Naive thymus-derived CD4-positive, alpha-beta T cell (primary cell): ENCODE measurements at regions of chr1 and their contacts with region 1.

Region 1: GRCh38 chr1:27392096-27392777 is at the start of gene GPR3:
- DNase-seq: peak; percentile 82 to 95 (median 88)
- ATAC-seq: peak; percentile 97
- H3K4me3 ChIP-seq: peak within 1 kb of the TSS; percentile 57
- H3K4me3 Mint-ChIP-seq: peak within 1 kb of the TSS; percentile 76 to 90 (median 83)
- H3K27ac ChIP-seq: peak within 1 kb of the TSS; percentile 64
- H3K27ac Mint-ChIP-seq: peak within 1 kb of the TSS; percentile 54 to 98 (median 84)
- H3K4me1 ChIP-seq: peaks cover 9 to 18% of the 10 kb centered on the region in 2 donors
- H3K4me1 Mint-ChIP-seq: peaks cover 12 to 27% (median 20%) of the 10 kb centered on the region in 7 donors
- H3K27me3 ChIP-seq: no peaks in the 10 kb centered on the region
- H3K27me3 Mint-ChIP-seq: peaks cover 0 to 16% (median 0%) of the 10 kb centered on the region in 5 donors
- total RNA-seq, gene GPR3: 0.24 to 0.93 (median 0.45) TPM in 3 of 5 experiments, not detected in the others

Region 2: GRCh38 chr1:27044613-27045151 is 347.6 kb before region 1 on chr1:
- CTCF ChIA-PET with region 1: interaction called, 3 read pairs
- POLR2A ChIA-PET with region 1: no interaction called
- intact Hi-C with region 1: loop called (anchors 10 kb)
- DNase-seq: peak; percentile 69 to 92 (median 86)
- ATAC-seq: peak; percentile 95
- H3K4me3 ChIP-seq: peak overlapping the region; percentile 39
- H3K4me3 Mint-ChIP-seq: peak overlapping the region; percentile 39 to 85 (median 64)
- H3K27ac ChIP-seq: peak overlapping the region; percentile 58
- H3K27ac Mint-ChIP-seq: peak overlapping the region; percentile 1 to 86 (median 40)
- H3K4me1 ChIP-seq: peaks cover 0 to 15% of the 10 kb centered on the region in 2 donors
- H3K4me1 Mint-ChIP-seq: peaks cover 3 to 26% (median 19%) of the 10 kb centered on the region in 7 donors
- H3K27me3 ChIP-seq: no peaks in the 10 kb centered on the region
- H3K27me3 Mint-ChIP-seq: no peaks in the 10 kb centered on the region

Region 3: GRCh38 chr1:27203946-27204345 is 188.3 kb before region 1 on chr1:
- CTCF ChIA-PET with region 1: no interaction called
- POLR2A ChIA-PET with region 1: no interaction called
- intact Hi-C with region 1: loop called in 1 of 2 experiments (anchors 2 kb)
- DNase-seq: no peak
- ATAC-seq: no peak
- H3K4me3 ChIP-seq: no peak overlapping the region
- H3K4me3 Mint-ChIP-seq: no peak overlapping the region
- H3K27ac ChIP-seq: no peak overlapping the region
- H3K27ac Mint-ChIP-seq: no peak overlapping the region
- H3K4me1 ChIP-seq: no peaks in the 10 kb centered on the region
- H3K4me1 Mint-ChIP-seq: no peaks in the 10 kb centered on the region
- H3K27me3 ChIP-seq: no peaks in the 10 kb centered on the region
- H3K27me3 Mint-ChIP-seq: peaks cover 0 to 5% (median 0%) of the 10 kb centered on the region in 5 donors

Region 4: GRCh38 chr1:27332536-27333281 is 59.5 kb before region 1 on chr1:
- CTCF ChIA-PET with region 1: interaction called, 72 read pairs
- POLR2A ChIA-PET with region 1: interaction called, 3 read pairs
- intact Hi-C with region 1: loop called (anchors 1 kb)
- DNase-seq: peak in 8 of 9 donors; percentile 49 to 71 (median 56)
- ATAC-seq: peak; percentile 90
- H3K4me3 ChIP-seq: no peak overlapping the region
- H3K4me3 Mint-ChIP-seq: no peak overlapping the region
- H3K27ac ChIP-seq: no peak overlapping the region
- H3K27ac Mint-ChIP-seq: peak overlapping the region in 5 of 9 donors; percentile 21 to 67 (median 50)
- H3K4me1 ChIP-seq: peaks cover 7 to 11% of the 10 kb centered on the region in 2 donors
- H3K4me1 Mint-ChIP-seq: peaks cover 29 to 51% (median 44%) of the 10 kb centered on the region in 7 donors
- H3K27me3 ChIP-seq: no peaks in the 10 kb centered on the region
- H3K27me3 Mint-ChIP-seq: no peaks in the 10 kb centered on the region

Region 5: DNA sequence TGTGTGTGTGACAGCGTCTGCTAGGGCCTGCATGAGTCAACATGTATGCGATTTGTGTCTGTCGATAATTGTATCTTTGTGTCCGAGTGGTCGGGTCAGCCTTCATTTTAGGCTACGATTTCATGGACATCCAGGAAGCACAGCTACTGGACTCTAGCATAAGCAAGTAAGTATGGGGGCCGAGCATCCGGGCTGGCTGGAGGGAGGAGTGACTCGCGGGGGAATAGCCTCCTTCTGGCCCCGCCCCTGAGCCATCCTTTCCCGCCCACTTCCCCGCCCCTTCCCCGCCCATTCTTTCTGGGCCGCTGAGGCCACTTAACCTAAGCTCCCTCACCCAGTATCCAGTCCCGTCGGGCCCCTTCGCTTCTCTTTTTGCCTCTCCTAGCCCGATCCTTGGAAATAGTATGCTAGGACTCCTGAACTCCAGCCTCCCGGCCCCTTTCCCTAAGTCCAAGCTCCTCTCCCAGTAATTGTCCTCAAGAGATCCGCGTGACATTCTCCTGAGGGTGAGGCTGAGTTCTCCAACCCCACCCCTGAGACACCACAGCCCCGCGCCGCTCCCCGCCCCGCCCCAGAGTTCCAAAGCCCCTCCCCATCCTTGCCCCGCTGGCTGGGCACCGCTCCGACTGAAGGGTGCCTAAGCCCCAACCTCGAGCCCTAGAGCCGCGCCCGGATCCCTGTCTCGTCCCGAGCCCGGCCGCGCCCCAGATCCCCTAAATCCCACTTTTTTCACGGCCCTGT is 26.7 kb before region 1 on chr1:
- CTCF ChIA-PET with region 1: interaction called, 18 read pairs
- POLR2A ChIA-PET with region 1: no interaction called
- intact Hi-C with region 1: loop called (anchors 1 kb)
- DNase-seq: peak; percentile 48 to 77 (median 67)
- ATAC-seq: peak; percentile 78
- H3K4me3 ChIP-seq: peak overlapping the region; percentile 61
- H3K4me3 Mint-ChIP-seq: peak overlapping the region; percentile 74 to 93 (median 88)
- H3K27ac ChIP-seq: peak overlapping the region; percentile 60
- H3K27ac Mint-ChIP-seq: peak overlapping the region; percentile 54 to 90 (median 73)
- H3K4me1 ChIP-seq: peaks cover 13 to 17% of the 10 kb centered on the region in 2 donors
- H3K4me1 Mint-ChIP-seq: peaks cover 21 to 55% (median 42%) of the 10 kb centered on the region in 7 donors
- H3K27me3 ChIP-seq: no peaks in the 10 kb centered on the region
- H3K27me3 Mint-ChIP-seq: no peaks in the 10 kb centered on the region